ENCODE measurements at regions of chrX and their contacts with region 1.

Region 1: GRCh38 chrX:130144509-130144908 is 21.1 kb downstream of the AIFM1 start:
- DNase-seq: peak in 2 of 9 experiments; percentile 8 to 17
- ATAC-seq: no peak
- H3K4me3 ChIP-seq: no peak overlapping the region
- H3K4me3 Mint-ChIP-seq: no peak overlapping the region
- H3K27ac ChIP-seq: no peak overlapping the region
- H3K27ac Mint-ChIP-seq: no peak overlapping the region
- H3K4me1 ChIP-seq: no peaks in the 10 kb centered on the region
- H3K4me1 Mint-ChIP-seq: no peaks in the 10 kb centered on the region
- H3K27me3 ChIP-seq: no peaks in the 10 kb centered on the region
- H3K27me3 Mint-ChIP-seq: no peaks in the 10 kb centered on the region
- CTCF ChIP-seq: no peak

Region 2: GRCh38 chrX:130190801-130191200 is 46.3 kb after region 1 on chrX:
- CTCF ChIA-PET with region 1: interaction called, 26 read pairs
- POLR2A ChIA-PET with region 1: no interaction called
- intact Hi-C with region 1: loop called (anchors 1 to 5 kb)
- DNase-seq: no peak
- ATAC-seq: no peak
- H3K4me3 ChIP-seq: no peak overlapping the region
- H3K4me3 Mint-ChIP-seq: no peak overlapping the region
- H3K27ac ChIP-seq: no peak overlapping the region
- H3K27ac Mint-ChIP-seq: no peak overlapping the region
- H3K4me1 ChIP-seq: no peaks in the 10 kb centered on the region
- H3K4me1 Mint-ChIP-seq: peaks cover 2% of the 10 kb centered on the region
- H3K27me3 ChIP-seq: no peaks in the 10 kb centered on the region
- H3K27me3 Mint-ChIP-seq: no peaks in the 10 kb centered on the region
- CTCF ChIP-seq: no peak

Region 3: DNA sequence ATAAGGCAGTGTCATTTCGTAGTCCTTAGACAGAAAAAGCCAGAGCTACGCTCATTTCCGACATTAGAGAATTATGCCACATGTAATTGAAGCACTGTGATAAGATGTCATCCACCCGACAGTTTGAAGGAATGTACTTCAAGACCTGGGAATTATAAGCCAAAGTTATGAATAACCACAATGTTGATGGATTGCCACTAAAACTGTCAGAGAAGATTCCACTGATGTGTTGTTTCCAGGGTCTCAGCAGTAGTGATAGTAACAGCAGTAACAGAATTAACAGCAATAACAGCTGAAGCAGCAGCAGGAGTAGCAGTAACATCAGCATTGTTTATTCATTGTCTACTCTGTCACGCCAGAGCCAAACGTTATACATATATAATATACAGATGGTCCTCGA is 52.0 kb after region 1 on chrX:
- CTCF ChIA-PET with region 1: interaction called, 26 read pairs
- POLR2A ChIA-PET with region 1: no interaction called
- intact Hi-C with region 1: loop called (anchors 1 to 5 kb)
- DNase-seq: no peak
- ATAC-seq: no peak
- H3K4me3 ChIP-seq: no peak overlapping the region
- H3K4me3 Mint-ChIP-seq: no peak overlapping the region
- H3K27ac ChIP-seq: no peak overlapping the region
- H3K27ac Mint-ChIP-seq: no peak overlapping the region
- H3K4me1 ChIP-seq: no peaks in the 10 kb centered on the region
- H3K4me1 Mint-ChIP-seq: peaks cover 2% of the 10 kb centered on the region
- H3K27me3 ChIP-seq: no peaks in the 10 kb centered on the region
- H3K27me3 Mint-ChIP-seq: no peaks in the 10 kb centered on the region
- CTCF ChIP-seq: no peak

Measured in CD8-positive, alpha-beta T cell (primary cell).